Activated naive CD4-positive, alpha-beta T cell treated with anti-CD3 and anti-CD28 coated beads, Interleukin-2, amount 10 ng/mL, durations not matched to agents 7 days and 5 days (primary cell): ENCODE measurements at regions of chr14 and their contacts with region 1.

Region 1: GRCh38 chr14:39015360-39015961 is 87.6 kb downstream of the SEC23A start:
- DNase-seq: peak; percentile 47
- H3K4me3 Mint-ChIP-seq: no peak overlapping the region
- H3K27ac Mint-ChIP-seq: no peak overlapping the region
- H3K4me1 Mint-ChIP-seq: no peaks in the 10 kb centered on the region
- H3K27me3 Mint-ChIP-seq: no peaks in the 10 kb centered on the region

Region 2: GRCh38 chr14:38721822-38722431 is 293.5 kb before region 1 on chr14:
- CTCF ChIA-PET with region 1: interaction called, 10 read pairs
- DNase-seq: peak; percentile 57
- H3K4me3 Mint-ChIP-seq: no peak overlapping the region
- H3K27ac Mint-ChIP-seq: no peak overlapping the region
- H3K4me1 Mint-ChIP-seq: no peaks in the 10 kb centered on the region
- H3K27me3 Mint-ChIP-seq: no peaks in the 10 kb centered on the region

Region 3: GRCh38 chr14:38755036-38755435 is 260.4 kb before region 1 on chr14:
- CTCF ChIA-PET with region 1: no interaction called
- DNase-seq: no peak
- H3K4me3 Mint-ChIP-seq: no peak overlapping the region
- H3K27ac Mint-ChIP-seq: no peak overlapping the region
- H3K4me1 Mint-ChIP-seq: no peaks in the 10 kb centered on the region
- H3K27me3 Mint-ChIP-seq: no peaks in the 10 kb centered on the region

Region 4: GRCh38 chr14:38931969-38932652 is 83.3 kb before region 1 on chr14:
- CTCF ChIA-PET with region 1: no interaction called
- DNase-seq: no peak
- H3K4me3 Mint-ChIP-seq: no peak overlapping the region
- H3K27ac Mint-ChIP-seq: no peak overlapping the region
- H3K4me1 Mint-ChIP-seq: no peaks in the 10 kb centered on the region
- H3K27me3 Mint-ChIP-seq: peaks cover 3% of the 10 kb centered on the region

Region 5: DNA sequence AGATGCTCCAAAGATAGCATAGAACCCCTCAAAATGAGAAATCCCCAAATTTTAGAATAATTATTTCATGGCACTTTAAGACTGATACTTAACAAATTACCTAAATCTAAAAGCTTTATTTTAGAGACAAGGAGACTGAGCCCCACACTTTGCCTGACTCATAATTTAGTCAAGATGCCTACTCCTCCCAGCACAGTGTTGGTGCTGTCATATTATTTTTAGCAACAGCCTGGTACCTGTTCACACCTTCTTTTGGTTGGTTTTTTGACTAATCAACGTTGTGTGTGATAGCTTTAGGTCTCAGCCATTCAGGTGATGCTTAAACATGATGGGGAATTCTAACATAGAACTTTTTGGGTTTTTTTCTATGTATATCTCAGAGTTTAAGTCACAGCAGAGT is 32.6 kb before region 1 on chr14:
- CTCF ChIA-PET with region 1: no interaction called
- DNase-seq: no peak
- H3K4me3 Mint-ChIP-seq: no peak overlapping the region
- H3K27ac Mint-ChIP-seq: no peak overlapping the region
- H3K4me1 Mint-ChIP-seq: no peaks in the 10 kb centered on the region
- H3K27me3 Mint-ChIP-seq: no peaks in the 10 kb centered on the region

Region 6: DNA sequence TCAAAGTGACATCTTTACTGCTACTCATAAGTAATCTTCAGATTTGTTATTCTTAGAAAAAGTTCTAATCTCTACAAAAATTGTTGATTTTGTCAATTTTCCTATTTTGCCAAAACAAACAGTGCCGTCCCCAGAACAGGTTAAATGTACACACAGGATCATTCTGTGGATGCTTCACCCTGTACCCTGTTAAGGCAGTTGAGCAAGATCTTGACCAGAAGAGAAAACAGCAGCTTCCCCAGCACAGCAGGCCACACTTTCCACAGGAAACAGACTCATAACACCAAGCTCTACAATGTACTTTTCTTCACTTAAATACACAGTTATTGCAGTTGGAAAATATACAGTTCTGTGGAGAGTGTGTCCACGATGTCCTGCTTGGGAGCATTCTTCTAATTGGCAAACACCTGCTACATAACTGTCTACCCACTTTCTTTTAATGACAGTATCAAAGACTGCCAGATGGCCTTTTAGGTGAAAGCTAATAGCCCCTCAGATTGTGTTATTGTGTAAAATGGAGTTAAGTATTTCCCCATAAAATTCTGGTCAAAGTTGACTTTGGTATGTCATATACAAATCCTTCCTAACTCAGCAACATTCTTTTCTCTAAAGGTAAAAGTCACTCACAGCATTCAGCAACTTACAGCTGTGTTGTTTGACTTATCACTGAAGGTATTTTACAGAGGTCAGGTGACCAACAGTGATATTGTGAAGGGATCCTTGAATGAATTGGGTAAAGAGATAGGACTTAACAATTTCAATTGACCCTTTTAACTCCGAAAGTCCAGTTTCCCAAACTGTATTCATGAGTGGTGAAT is 10.6 kb after region 1 on chr14:
- CTCF ChIA-PET with region 1: interaction called, 12 read pairs
- DNase-seq: no peak
- H3K4me3 Mint-ChIP-seq: no peak overlapping the region
- H3K27ac Mint-ChIP-seq: no peak overlapping the region
- H3K4me1 Mint-ChIP-seq: peaks cover 8% of the 10 kb centered on the region
- H3K27me3 Mint-ChIP-seq: no peaks in the 10 kb centered on the region